ENCODE measurements at regions of chr10 and their contacts with region 1.

Region 1: DNA sequence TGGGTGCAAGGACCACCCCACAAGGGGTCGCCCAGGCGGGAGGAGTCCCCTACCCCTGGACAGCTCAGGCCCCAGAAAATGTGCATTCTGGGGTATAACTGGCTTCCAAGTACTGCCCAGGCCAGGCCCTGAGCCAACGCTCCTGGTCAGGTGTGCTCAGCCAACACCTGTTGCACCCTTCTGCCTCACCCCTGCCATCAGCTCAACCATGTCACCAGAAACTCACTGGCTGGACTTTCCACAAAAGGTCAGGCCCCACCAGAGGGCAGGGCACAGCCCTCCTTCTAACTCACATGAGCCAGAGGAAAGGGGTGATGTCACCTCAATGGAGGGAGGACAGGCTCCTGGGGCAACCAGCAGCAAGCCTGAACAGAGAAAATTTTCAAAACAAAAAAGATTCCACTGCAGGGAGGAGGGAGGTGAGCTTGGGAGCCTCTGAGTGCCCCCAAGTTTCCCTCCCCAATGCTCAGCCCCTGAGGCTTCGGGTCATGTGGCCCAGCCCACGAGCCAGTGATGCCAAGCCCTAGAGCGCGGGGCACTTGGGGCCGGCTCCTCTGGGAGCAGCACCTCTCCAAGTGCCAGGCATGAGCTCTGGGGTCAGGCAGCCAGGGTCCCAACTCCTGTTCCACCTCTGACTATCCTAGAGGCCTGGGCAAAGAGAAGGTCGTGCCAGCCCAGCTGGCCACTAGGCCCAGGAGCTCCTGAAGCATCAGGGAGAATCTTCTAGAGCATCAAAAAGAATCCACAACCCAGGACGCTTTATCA is 2.2 kb downstream of the OGDHL start:
- DNase-seq: peak in 1 of 7 donors; percentile 49
- H3K4me3 ChIP-seq: no peak overlapping the region
- H3K27ac ChIP-seq: peak overlapping the region in 1 of 5 donors; percentile 66
- H3K4me1 ChIP-seq: no peaks in the 10 kb centered on the region
- H3K27me3 ChIP-seq: no peaks in the 10 kb centered on the region
- CTCF ChIP-seq: no peak
- POLR2A ChIP-seq: no peak

Region 2: GRCh38 chr10:49362596-49363260 is 397.2 kb before region 1 on chr10:
- intact Hi-C with region 1: no loop called
- DNase-seq: peak in 2 of 7 donors; percentile 26 to 50
- H3K4me3 ChIP-seq: no peak overlapping the region
- H3K27ac ChIP-seq: no peak overlapping the region
- H3K4me1 ChIP-seq: no peaks in the 10 kb centered on the region
- H3K27me3 ChIP-seq: no peaks in the 10 kb centered on the region
- CTCF ChIP-seq: no peak
- POLR2A ChIP-seq: no peak

Region 3: GRCh38 chr10:49619613-49620012 is 140.4 kb before region 1 on chr10:
- intact Hi-C with region 1: loop called in 1 of 2 experiments (anchors 5 kb)
- DNase-seq: no peak
- H3K4me3 ChIP-seq: no peak overlapping the region
- H3K27ac ChIP-seq: no peak overlapping the region
- H3K4me1 ChIP-seq: no peaks in the 10 kb centered on the region
- H3K27me3 ChIP-seq: peaks cover 18% of the 10 kb centered on the region
- CTCF ChIP-seq: no peak
- POLR2A ChIP-seq: no peak